Panc1 (cell line): ENCODE measurements at regions of chr18 and their contacts with region 1.

Region 1: GRCh38 chr18:1676387-1676786 is 771.7 kb downstream of the ADCYAP1 start:
- DNase-seq: no peak
- ATAC-seq: no peak
- H3K4me3 ChIP-seq: no peak overlapping the region
- H3K27ac ChIP-seq: no peak overlapping the region
- H3K4me1 ChIP-seq: no peaks in the 10 kb centered on the region
- H3K27me3 ChIP-seq: no peaks in the 10 kb centered on the region
- CTCF ChIP-seq: no peak

Region 2: DNA sequence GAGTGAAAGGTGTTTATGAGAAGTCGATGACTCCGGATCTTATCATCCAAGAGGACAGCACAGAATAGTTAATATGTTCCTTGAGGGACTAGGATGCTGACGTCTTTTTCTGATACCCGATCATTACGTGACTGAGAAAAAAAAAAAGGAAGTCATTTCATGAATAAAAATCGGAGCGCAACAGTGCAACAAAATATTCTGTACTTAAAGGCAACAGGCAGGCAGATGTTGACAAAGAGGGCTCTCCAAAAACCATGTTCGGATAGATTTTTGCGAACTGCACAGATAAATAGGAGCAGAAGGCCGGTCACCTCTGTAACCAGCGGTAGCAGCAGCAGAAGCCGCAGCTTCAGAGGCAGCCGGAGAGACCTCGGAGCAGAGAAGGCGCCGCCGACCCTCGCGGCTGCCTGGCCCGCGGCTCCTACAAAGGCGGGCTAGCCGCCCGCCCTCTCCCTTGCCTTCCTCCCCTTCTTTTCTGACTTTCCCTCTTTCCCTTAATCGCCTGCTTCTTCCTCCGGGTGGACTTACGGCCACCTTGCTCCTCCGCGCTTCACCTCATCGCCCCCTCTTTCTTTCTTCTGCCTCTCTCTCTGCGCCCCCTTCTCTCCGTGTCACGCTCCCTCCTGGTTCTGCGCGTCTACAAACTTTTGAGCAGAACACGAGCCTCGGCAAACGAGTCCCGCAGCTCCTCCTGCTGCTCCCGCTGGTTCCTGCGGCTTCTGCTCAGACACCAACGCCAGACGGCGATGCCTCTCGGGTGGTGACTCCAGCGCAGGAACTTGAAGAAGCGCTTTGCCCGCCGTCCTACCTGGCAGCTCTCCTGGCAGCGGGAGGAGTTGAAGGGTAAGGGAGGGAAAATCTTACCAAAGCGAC is 771.9 kb before region 1 on chr18 and contains the start of gene ADCYAP1:
- CTCF ChIA-PET with region 1: interaction called, 12 read pairs
- POLR2A ChIA-PET with region 1: no interaction called
- in situ Hi-C with region 1: no loop called
- intact Hi-C with region 1: no loop called
- DNase-seq: no peak
- ATAC-seq: peak; percentile 74
- H3K4me3 ChIP-seq: peak within 1 kb of the TSS; percentile 8 to 23
- H3K27ac ChIP-seq: no peak within 1 kb of the TSS
- H3K4me1 ChIP-seq: no peaks in the 10 kb centered on the region
- H3K27me3 ChIP-seq: peaks cover 25% of the 10 kb centered on the region
- CTCF ChIP-seq: peak; percentile 34
- total RNA-seq, gene ADCYAP1: not detected

Region 3: GRCh38 chr18:1618364-1618763 is 58.0 kb before region 1 on chr18:
- CTCF ChIA-PET with region 1: no interaction called
- POLR2A ChIA-PET with region 1: no interaction called
- in situ Hi-C with region 1: no loop called
- intact Hi-C with region 1: no loop called
- DNase-seq: no peak
- ATAC-seq: no peak
- H3K4me3 ChIP-seq: no peak overlapping the region
- H3K27ac ChIP-seq: no peak overlapping the region
- H3K4me1 ChIP-seq: no peaks in the 10 kb centered on the region
- H3K27me3 ChIP-seq: no peaks in the 10 kb centered on the region
- CTCF ChIP-seq: no peak